ENCODE measurements at regions of chr9 and their contacts with region 1.

Region 1: DNA sequence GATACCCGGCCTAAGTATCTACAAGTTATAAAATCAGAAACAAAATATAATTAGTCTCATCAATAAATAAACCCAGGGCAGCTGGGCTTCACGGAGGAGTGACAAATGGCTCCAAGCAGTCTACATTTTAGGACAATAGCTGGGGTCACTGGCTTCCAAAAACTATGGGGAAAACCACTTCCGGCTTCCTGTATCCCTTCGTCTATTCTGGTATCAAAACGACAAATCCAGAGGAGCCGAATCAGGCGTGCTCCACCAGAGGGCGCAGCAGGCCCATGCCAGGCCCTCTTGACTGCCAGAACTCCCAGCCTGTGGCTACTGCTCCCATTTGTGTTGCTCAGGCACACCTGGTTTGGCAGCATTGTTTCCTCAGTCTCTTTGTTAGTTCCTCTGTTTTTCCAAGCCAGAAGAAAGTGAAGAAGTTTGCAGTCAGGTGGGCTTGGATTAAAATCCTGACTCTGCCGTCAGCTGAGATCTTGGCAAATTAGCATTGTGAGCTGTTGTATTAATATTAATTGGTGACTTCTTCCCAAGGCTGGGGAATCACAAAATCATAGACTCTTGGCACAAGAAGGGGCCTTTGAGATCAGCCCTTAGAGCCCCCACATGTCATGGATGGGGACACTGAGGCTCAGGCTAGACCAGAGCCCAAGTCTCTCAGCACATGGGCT is 11.6 kb upstream of the RAB14 start:
- DNase-seq: peak; percentile 93

Region 2: DNA sequence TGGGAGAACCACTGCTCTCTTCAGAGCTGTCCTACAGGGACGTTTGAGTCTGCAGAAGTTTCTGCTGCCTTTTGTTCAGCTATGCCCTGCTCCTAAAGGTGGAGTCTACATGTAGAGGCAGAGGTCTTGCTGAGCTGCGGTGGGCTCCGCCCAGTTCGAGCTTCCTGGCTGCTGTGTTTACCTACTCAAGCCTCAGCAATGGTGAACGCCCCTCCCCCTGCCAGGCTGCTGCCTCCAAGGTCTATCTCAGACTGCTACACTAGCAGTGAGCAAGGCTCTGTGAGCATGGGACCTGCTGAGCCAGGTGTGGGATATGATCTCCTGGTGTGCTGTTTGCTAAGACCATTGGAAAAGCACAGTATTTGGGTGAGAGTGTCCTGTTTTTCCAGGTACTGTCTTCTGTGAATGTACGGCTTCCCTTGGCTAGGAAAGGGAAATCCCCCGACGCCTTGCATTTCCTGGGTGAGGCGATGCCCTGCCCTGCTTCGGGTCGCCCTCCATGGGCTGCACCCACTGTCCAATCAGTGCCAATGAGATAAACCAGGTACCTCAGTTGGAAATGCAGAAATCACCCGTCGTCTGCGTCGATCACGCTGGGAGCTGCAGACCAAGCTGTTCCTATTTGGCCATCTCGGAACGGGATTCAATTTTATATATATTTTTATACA is 80.0 kb before region 1 on chr9:
- in situ Hi-C with region 1: no loop called
- DNase-seq: no peak

Region 3: GRCh38 chr9:121267689-121268597 is 54.7 kb after region 1 on chr9 and contains the start of gene GSN:
- in situ Hi-C with region 1: loop called (anchors 10 kb)
- DNase-seq: peak; percentile 55

Region 4: GRCh38 chr9:121383715-121384114 is 170.4 kb after region 1 on chr9:
- in situ Hi-C with region 1: loop called (anchors 10 kb)
- DNase-seq: peak; percentile 70

Measured in KBM-7 (cell line).